CD4-positive, alpha-beta memory T cell (primary cell): ENCODE measurements at regions of chr1 and their contacts with region 1.

Region 1: DNA sequence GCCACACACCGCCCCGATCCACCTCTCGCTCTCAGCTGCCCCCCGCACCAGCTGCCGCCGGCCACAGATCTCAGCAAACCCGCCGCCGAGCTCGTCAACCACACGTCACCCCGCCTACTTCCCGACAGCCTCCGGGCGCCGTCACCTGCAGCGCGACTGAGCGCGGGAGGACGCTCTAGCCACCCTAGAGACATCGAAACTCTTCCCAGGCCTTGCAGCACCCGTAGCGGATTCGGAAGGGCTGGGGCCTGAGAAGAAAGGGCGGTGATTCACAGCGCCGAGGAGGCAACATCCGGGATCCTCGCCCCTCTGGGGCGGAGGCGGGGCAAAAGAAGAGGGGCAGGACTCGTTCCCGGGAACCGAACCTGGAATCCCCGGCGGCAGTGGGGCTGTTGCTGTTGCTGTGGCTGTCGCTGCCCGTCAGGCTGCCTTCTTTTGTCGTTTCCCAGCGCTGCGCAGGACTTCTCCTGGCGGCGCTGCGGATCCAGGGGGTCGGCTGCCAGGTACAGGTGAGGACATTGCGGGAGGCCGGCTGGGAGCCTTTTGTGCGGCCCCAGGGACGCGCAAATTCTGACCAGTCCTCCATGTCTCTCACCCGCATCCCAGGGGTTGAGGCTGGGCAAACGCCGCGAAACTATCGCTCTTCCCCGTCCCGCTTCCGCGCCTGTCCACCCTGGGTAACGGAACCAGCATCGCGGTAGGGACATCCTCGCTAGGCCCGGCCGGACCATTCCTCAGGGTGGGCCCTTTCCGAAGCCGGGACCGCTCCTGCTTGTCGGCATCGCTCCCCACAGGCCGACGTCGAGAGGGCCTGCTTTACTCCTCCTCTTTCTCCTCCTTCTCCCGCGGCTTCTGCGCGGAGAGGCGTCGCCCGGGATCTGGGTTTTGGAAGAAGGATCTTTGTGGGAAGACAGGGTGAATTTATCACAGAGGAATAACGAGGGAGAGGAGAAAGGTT is at the starts of genes RO60 and UCHL5:
- DNase-seq: peak; percentile 94 to 97 (median 96)
- H3K4me3 ChIP-seq: peak within 1 kb of the TSS; percentile 73 to 91
- H3K4me3 Mint-ChIP-seq: peak within 1 kb of the TSS; percentile 90 to 100 (median 99)
- H3K27ac ChIP-seq: peak within 1 kb of the TSS; percentile 89
- H3K27ac Mint-ChIP-seq: peak within 1 kb of the TSS; percentile 95 to 100 (median 99)
- H3K4me1 ChIP-seq: peaks cover 60% of the 10 kb centered on the region
- H3K4me1 Mint-ChIP-seq: peaks cover 41 to 79% (median 59%) of the 10 kb centered on the region in 4 donors
- H3K27me3 ChIP-seq: no peaks in the 10 kb centered on the region
- H3K27me3 Mint-ChIP-seq: peaks cover 0 to 1% of the 10 kb centered on the region in 2 donors
- total RNA-seq, gene RO60: 75.2 to 78.7 TPM
- total RNA-seq, gene UCHL5: 31.2 to 34.6 TPM

Region 2: GRCh38 chr1:192998536-192998935 is 61.0 kb before region 1 on chr1:
- CTCF ChIA-PET with region 1: no interaction called
- POLR2A ChIA-PET with region 1: no interaction called
- intact Hi-C with region 1: no loop called
- DNase-seq: no peak
- H3K4me3 ChIP-seq: no peak overlapping the region
- H3K4me3 Mint-ChIP-seq: no peak overlapping the region
- H3K27ac ChIP-seq: no peak overlapping the region
- H3K27ac Mint-ChIP-seq: peak overlapping the region in 1 of 7 donors; percentile 37
- H3K4me1 ChIP-seq: no peaks in the 10 kb centered on the region
- H3K4me1 Mint-ChIP-seq: peaks cover 0 to 2% (median under 1%) of the 10 kb centered on the region in 4 donors
- H3K27me3 ChIP-seq: no peaks in the 10 kb centered on the region
- H3K27me3 Mint-ChIP-seq: no peaks in the 10 kb centered on the region

Region 3: DNA sequence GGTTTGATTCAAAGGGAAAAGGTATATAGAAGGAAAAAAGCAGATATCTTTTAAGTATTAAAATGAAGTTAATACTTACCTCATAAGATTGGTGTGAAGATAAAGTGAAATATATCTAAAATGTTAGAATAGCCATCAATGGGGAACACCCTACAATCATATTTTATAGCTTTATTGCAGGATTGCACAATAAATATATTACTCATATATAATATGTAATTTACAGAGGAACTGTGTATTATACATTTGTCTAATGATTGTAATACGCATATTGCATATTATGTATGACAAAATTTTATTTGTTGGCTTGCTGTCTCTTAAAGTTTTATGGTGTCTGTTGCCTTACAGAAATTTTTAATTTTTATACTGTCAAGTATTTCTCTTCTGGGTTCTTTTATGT is 48.1 kb before region 1 on chr1:
- CTCF ChIA-PET with region 1: no interaction called
- POLR2A ChIA-PET with region 1: no interaction called
- intact Hi-C with region 1: no loop called
- DNase-seq: no peak
- H3K4me3 ChIP-seq: no peak overlapping the region
- H3K4me3 Mint-ChIP-seq: no peak overlapping the region
- H3K27ac ChIP-seq: no peak overlapping the region
- H3K27ac Mint-ChIP-seq: no peak overlapping the region
- H3K4me1 ChIP-seq: no peaks in the 10 kb centered on the region
- H3K4me1 Mint-ChIP-seq: no peaks in the 10 kb centered on the region
- H3K27me3 ChIP-seq: no peaks in the 10 kb centered on the region
- H3K27me3 Mint-ChIP-seq: no peaks in the 10 kb centered on the region

Region 4: GRCh38 chr1:193042766-193043691 is 16.5 kb before region 1 on chr1:
- CTCF ChIA-PET with region 1: interaction called, 10 read pairs
- POLR2A ChIA-PET with region 1: interaction called, 8 read pairs
- intact Hi-C with region 1: no loop called
- DNase-seq: no peak
- H3K4me3 ChIP-seq: no peak overlapping the region
- H3K4me3 Mint-ChIP-seq: no peak overlapping the region
- H3K27ac ChIP-seq: no peak overlapping the region
- H3K27ac Mint-ChIP-seq: peak overlapping the region in 4 of 7 donors; percentile 1 to 67 (median 8)
- H3K4me1 ChIP-seq: no peaks in the 10 kb centered on the region
- H3K4me1 Mint-ChIP-seq: peaks cover 14 to 30% (median 22%) of the 10 kb centered on the region in 4 donors
- H3K27me3 ChIP-seq: no peaks in the 10 kb centered on the region
- H3K27me3 Mint-ChIP-seq: no peaks in the 10 kb centered on the region

Region 5: GRCh38 chr1:193069748-193070385 is 10.3 kb after region 1 on chr1:
- CTCF ChIA-PET with region 1: interaction called, 13 read pairs
- POLR2A ChIA-PET with region 1: interaction called, 9 read pairs
- intact Hi-C with region 1: no loop called
- DNase-seq: no peak
- H3K4me3 ChIP-seq: no peak overlapping the region
- H3K4me3 Mint-ChIP-seq: peak overlapping the region in 6 of 8 donors; percentile 9 to 48 (median 24)
- H3K27ac ChIP-seq: no peak overlapping the region
- H3K27ac Mint-ChIP-seq: peak overlapping the region; percentile 39 to 82 (median 62)
- H3K4me1 ChIP-seq: peaks cover 38% of the 10 kb centered on the region
- H3K4me1 Mint-ChIP-seq: peaks cover 39 to 63% (median 53%) of the 10 kb centered on the region in 4 donors
- H3K27me3 ChIP-seq: no peaks in the 10 kb centered on the region
- H3K27me3 Mint-ChIP-seq: no peaks in the 10 kb centered on the region

Region 6: GRCh38 chr1:193104906-193105820 is 45.6 kb after region 1 on chr1 and contains the start of gene GLRX2:
- CTCF ChIA-PET with region 1: interaction called, 10 read pairs
- POLR2A ChIA-PET with region 1: interaction called, 14 read pairs
- intact Hi-C with region 1: loop called (anchors 1 kb)
- DNase-seq: peak; percentile 43 to 71 (median 58)
- H3K4me3 ChIP-seq: peak within 1 kb of the TSS; percentile 65 to 94
- H3K4me3 Mint-ChIP-seq: peak within 1 kb of the TSS; percentile 94 to 98 (median 95)
- H3K27ac ChIP-seq: peak within 1 kb of the TSS; percentile 59
- H3K27ac Mint-ChIP-seq: peak within 1 kb of the TSS; percentile 61 to 95 (median 91)
- H3K4me1 ChIP-seq: peaks cover 18% of the 10 kb centered on the region
- H3K4me1 Mint-ChIP-seq: peaks cover 19 to 30% (median 24%) of the 10 kb centered on the region in 4 donors
- H3K27me3 ChIP-seq: no peaks in the 10 kb centered on the region
- H3K27me3 Mint-ChIP-seq: no peaks in the 10 kb centered on the region
- total RNA-seq, gene GLRX2: 15.0 to 17.0 TPM

Region 7: GRCh38 chr1:193121616-193122593 is 62.4 kb after region 1 on chr1 and contains the start of gene CDC73:
- CTCF ChIA-PET with region 1: interaction called, 8 read pairs
- POLR2A ChIA-PET with region 1: interaction called, 45 read pairs
- intact Hi-C with region 1: loop called (anchors 1 kb)
- DNase-seq: peak; percentile 98 to 100 (median 99)
- H3K4me3 ChIP-seq: peak within 1 kb of the TSS; percentile 68 to 89
- H3K4me3 Mint-ChIP-seq: peak within 1 kb of the TSS; percentile 90 to 98 (median 94)
- H3K27ac ChIP-seq: peak within 1 kb of the TSS; percentile 80
- H3K27ac Mint-ChIP-seq: peak within 1 kb of the TSS; percentile 93 to 98 (median 98)
- H3K4me1 ChIP-seq: peaks cover 45% of the 10 kb centered on the region
- H3K4me1 Mint-ChIP-seq: peaks cover 27 to 72% (median 43%) of the 10 kb centered on the region in 4 donors
- H3K27me3 ChIP-seq: no peaks in the 10 kb centered on the region
- H3K27me3 Mint-ChIP-seq: no peaks in the 10 kb centered on the region
- total RNA-seq, gene CDC73: 70.4 to 75.0 TPM

Region 8: DNA sequence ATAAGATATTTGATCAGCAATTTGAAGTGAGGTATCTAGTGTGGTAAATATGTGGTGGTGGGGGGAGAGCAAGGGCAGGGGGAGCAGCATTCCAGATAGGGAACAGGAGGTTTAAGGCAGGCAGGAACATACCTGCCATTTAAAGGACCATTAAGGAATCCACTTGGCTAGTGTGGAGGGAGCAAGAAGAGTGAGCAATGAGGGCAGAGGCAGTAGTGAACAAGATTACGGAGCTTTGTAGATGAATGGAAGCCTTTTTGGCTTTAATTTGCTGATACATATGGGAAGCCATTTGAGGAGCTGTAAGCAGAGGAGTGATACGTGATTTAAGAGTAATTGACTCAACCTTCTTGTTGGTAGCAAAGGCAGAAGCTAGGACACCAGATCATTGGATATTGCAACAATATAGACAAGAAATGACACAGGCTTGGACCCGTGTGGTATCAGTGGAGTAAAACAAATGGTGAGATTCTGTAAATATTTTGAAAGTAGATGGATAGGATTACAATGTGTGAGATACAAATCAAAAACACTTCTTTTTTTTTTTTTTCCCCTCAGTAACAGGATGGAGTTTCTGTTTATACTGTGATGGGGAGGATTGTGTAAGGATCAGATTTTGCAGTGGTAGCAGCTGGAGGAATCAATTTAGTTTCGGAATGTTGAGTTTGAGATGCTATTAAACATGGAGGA is 200.7 kb after region 1 on chr1:
- CTCF ChIA-PET with region 1: no interaction called
- POLR2A ChIA-PET with region 1: no interaction called
- intact Hi-C with region 1: no loop called
- DNase-seq: no peak
- H3K4me3 ChIP-seq: no peak overlapping the region
- H3K4me3 Mint-ChIP-seq: no peak overlapping the region
- H3K27ac ChIP-seq: no peak overlapping the region
- H3K27ac Mint-ChIP-seq: no peak overlapping the region
- H3K4me1 ChIP-seq: no peaks in the 10 kb centered on the region
- H3K4me1 Mint-ChIP-seq: peaks cover 0 to 7% (median 3%) of the 10 kb centered on the region in 4 donors
- H3K27me3 ChIP-seq: no peaks in the 10 kb centered on the region
- H3K27me3 Mint-ChIP-seq: no peaks in the 10 kb centered on the region

Region 9: DNA sequence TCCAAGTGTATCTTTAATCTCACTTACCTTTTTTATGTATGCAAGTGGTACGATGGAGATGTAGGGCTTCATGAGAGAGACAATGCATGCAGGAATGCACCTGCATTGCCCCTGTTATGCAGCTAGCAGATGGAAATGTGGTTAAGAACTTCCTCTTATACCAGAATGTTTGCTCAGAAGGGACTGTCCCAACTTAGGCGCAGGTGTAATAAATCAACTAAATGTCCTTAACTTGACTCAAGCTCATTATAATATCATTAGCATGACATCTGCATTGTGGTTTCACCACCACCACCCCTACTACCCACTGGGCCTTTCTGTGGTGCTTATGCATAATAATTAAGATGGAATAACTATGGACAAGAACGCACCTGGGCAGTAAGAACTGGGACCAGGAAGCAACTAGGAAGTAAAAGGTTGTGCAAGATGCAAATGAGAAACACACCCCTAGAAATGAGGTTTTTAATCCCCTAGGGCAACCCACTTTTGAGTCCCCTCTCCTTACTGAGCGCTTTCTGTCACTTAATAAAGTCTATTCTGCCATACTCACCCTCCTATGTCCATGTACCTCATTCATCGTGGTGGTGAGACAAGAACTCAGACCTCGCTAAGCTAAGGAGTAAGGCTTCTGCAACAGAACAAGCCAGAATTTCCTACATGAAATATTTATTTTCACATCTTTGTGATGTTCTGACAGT is 1230.2 kb after region 1 on chr1:
- CTCF ChIA-PET with region 1: no interaction called
- POLR2A ChIA-PET with region 1: interaction called, 3 read pairs
- intact Hi-C with region 1: loop called (anchors 5 kb)
- DNase-seq: peak; percentile 72 to 89 (median 81)
- H3K4me3 ChIP-seq: peak overlapping the region; percentile 2 to 42
- H3K4me3 Mint-ChIP-seq: peak overlapping the region; percentile 60 to 84 (median 75)
- H3K27ac ChIP-seq: peak overlapping the region; percentile 50
- H3K27ac Mint-ChIP-seq: peak overlapping the region; percentile 12 to 86 (median 75)
- H3K4me1 ChIP-seq: peaks cover 22% of the 10 kb centered on the region
- H3K4me1 Mint-ChIP-seq: peaks cover 22 to 31% (median 24%) of the 10 kb centered on the region in 4 donors
- H3K27me3 ChIP-seq: no peaks in the 10 kb centered on the region
- H3K27me3 Mint-ChIP-seq: no peaks in the 10 kb centered on the region